ENCODE measurements at regions of chr12 and their contacts with region 1.

Region 1: GRCh38 chr12:106841510-106842302 is 67.2 kb downstream of the RIC8B start:
- DNase-seq: no peak
- ATAC-seq: peak; percentile 78 to 85

Region 2: DNA sequence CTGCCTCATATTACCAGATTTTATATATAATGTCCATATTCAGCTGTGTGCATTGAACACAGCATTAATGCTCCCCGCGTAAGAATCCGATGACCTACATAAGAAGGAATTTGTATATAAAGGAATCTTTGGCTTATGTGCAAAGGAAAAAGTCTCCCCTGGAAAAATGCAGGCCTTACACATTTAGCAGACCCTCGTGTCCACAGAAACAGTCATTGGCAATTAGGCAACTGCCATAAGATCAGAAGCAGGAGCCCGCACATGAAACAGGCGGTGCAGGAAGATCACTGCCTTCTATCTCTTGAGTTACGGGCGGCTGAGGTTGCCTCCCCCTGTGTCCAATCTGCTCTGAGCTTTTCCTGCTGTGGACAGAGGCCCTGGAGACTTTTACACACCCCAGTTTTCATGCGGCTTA is 322.1 kb before region 1 on chr12:
- intact Hi-C with region 1: no loop called
- DNase-seq: no peak
- ATAC-seq: no peak

Region 3: DNA sequence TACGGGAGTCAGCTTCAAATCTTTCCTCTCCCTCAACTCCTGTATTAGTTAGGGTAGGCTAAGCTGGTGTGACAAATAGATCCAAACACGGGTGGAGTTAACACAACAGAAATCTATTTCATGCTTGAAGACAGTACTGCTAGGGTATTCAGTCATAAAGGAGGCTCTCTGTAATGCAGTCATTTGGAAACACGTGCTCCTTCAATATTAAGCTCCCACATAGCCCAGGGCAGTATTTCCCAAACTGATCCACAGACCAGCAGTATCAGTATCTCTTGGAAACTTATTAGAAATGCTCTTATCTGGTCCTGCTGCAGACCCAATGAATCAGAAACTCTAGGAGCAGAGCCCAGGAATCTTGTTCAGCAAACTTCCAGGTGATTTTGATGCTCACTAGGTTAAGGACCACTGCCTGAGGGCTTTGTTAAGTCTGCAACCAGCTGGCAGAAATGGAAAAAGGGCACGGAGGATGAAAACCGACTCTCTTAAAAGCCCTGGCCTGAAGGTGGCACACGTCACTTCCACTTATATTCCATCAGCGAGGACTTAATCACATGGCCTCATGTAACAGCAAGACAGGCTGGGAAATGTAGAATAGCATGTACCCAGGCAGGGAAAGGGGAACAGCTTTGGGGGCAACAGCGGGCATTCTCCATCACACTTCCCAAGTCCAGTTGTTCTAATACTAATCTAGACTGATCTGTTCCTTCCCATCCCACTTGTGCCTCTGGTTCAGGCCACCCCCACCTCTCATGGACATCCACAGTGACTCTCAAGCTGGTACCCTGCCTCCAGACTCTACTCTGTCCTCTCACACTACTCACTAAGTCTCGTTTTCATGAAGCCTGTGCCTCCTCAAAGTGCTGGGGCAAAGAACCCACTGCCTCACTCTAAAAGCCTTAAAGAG is 105.4 kb before region 1 on chr12:
- intact Hi-C with region 1: loop called in 1 of 2 experiments (anchors 5 kb)
- DNase-seq: no peak
- ATAC-seq: no peak

Region 4: GRCh38 chr12:107200394-107200793 is 358.7 kb after region 1 on chr12:
- intact Hi-C with region 1: no loop called
- DNase-seq: no peak
- ATAC-seq: no peak